AG04450 (cell line): ENCODE measurements at regions of chr1 and their contacts with region 1.

Region 1: GRCh38 chr1:44730741-44731512 is at the start of gene RNU5D-1:
- DNase-seq: peak; percentile 94
- H3K4me3 ChIP-seq: peak within 1 kb of the TSS; percentile 17; the same call in 1 of the 2 replicates
- H3K27ac ChIP-seq: peak within 1 kb of the TSS; percentile 98
- H3K27me3 ChIP-seq: no peaks in the 10 kb centered on the region
- CTCF ChIP-seq: peak; percentile 82
- polyA plus RNA-seq, gene RNU5D-1: not detected in 2 replicates

Region 2: GRCh38 chr1:44405041-44405797 is 325.7 kb before region 1 on chr1 and contains the start of gene RNF220:
- CTCF ChIA-PET with region 1: no interaction called
- POLR2A ChIA-PET with region 1: no interaction called
- DNase-seq: peak; percentile 7
- H3K4me3 ChIP-seq: peak within 1 kb of the TSS; percentile 42
- H3K27ac ChIP-seq: no peak within 1 kb of the TSS
- H3K27me3 ChIP-seq: peaks cover 76% of the 10 kb centered on the region
- CTCF ChIP-seq: no peak
- polyA plus RNA-seq, gene RNF220: 46.4 and 48.0 TPM in 2 replicates

Region 3: DNA sequence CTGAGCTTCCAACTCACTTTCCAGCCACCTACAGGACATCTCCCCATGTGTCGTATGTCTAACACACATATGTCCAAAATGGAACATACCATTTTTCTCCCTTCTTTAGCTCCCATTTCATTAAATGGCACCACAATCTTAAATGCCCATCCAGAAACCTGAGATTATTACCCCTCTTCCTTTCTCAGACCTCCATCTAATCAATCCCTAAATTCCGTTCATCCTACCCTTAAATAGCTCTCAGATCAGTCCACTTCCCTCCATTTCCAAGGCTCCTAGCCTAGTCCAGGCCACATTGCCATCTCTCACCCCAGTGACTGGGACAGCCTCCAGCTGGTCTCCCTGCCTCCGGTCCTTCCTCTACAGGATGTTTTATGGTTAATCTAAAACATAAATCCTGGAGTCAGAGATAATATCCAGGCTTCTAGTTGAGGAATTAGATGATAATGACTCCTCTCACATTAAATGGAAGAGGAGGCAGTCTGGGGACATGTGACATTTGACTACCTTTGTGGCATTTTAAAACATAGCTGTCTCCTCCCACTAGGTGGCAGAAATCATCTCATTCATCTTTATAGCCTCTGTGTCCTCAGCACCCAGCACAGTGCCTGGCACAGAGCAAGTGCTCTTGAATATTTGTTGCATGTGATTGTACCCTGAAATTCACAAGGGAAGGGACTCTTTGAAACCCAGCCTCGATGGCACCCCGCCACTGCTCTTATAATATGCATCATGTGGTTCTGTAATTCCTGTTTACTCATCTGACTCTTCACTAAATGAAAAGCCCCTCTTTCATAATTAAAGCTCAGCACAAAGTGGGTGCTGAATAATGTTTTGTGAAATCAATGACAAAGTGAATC is 159.0 kb before region 1 on chr1:
- CTCF ChIA-PET with region 1: no interaction called
- POLR2A ChIA-PET with region 1: no interaction called
- DNase-seq: no peak
- H3K4me3 ChIP-seq: no peak overlapping the region
- H3K27ac ChIP-seq: no peak overlapping the region
- H3K27me3 ChIP-seq: peaks cover 52% of the 10 kb centered on the region
- CTCF ChIP-seq: peak; percentile 36

Region 4: DNA sequence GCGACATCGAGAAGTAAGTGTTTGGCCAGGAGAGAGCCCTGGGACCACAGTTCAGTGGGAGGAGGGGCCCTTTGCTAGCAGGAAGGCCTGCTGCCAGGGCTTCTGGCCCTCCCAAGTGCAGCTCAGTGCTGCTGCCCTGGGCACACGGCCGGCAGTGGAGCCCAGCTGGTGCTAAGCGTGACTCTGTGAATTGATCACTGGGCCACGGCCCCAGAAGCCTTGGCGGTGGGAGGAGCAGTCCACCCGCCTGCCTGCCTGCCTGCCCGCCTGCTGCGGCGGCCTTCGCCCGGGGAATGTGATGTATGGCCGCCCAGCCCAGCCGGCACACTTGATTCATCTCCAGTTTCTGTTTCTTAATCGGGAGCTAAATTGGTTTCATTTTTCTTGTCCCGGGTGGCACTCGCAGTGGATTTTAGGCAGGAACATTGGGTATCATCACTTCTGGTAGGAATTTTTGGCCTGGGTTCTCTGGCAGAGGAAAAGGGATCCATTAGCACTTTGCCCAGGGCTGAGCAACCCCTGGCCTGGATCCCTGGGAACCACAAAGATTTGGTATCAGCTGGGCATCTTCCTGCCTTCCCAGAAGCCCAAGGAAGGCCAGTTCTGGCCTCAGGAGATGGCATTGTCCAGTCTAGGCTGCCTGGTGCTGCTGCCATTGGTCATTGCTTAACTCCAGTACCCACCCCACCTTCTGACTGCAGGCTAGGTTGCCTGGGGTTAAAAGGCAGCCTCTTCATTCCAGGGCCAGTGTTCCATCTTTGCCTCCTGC is 85.3 kb before region 1 on chr1:
- CTCF ChIA-PET with region 1: no interaction called
- POLR2A ChIA-PET with region 1: interaction called, 11 read pairs
- DNase-seq: no peak
- H3K4me3 ChIP-seq: no peak overlapping the region; the same call in 1 of the 2 replicates
- H3K27ac ChIP-seq: peak overlapping the region; percentile 90
- H3K27me3 ChIP-seq: no peaks in the 10 kb centered on the region
- CTCF ChIP-seq: no peak

Region 5: GRCh38 chr1:44714944-44715571 is 15.9 kb before region 1 on chr1:
- CTCF ChIA-PET with region 1: interaction called, 44 read pairs
- POLR2A ChIA-PET with region 1: no interaction called
- DNase-seq: no peak
- H3K4me3 ChIP-seq: no peak overlapping the region
- H3K27ac ChIP-seq: no peak overlapping the region
- H3K27me3 ChIP-seq: no peaks in the 10 kb centered on the region
- CTCF ChIP-seq: peak; percentile 96

Region 6: DNA sequence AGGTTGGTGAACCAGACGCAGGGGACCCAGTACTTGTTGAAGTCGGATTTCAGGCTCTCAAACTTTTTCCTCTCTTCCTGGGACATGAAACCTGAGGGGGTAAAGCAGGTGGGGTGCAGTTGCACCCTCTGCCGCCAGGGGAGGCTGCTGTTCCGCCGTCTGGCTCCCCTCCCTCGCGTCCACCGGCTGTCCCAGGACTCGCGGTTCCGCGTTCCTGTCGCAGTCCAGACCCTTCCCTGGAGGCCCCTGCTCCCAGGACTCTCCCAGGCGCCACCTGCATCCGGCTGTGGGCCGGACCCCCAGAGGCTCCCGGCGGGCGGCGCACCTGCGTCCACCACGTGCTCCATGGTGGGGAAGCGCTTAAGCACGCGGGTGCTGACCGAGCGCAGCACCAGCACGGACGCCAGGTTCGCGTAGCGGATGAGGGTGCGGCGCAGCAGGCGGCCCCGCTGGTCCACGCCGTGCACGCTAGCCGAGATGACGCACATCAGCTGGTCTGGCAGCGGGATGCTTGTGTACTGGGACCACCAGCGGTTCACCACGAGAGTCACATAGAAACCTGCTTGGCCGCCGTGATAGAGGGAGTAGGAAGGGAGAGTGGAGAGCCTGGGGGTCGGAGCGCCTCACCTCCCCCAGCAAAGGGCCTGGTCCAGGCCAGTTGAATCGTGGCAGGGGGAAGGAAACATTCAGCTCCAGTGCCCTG is 55.4 kb after region 1 on chr1:
- CTCF ChIA-PET with region 1: interaction called, 10 read pairs
- POLR2A ChIA-PET with region 1: interaction called, 11 read pairs
- DNase-seq: no peak
- H3K4me3 ChIP-seq: peak overlapping the region; percentile 50
- H3K27ac ChIP-seq: no peak overlapping the region
- H3K27me3 ChIP-seq: peaks cover 2% of the 10 kb centered on the region
- CTCF ChIP-seq: peak; percentile 96

Region 7: GRCh38 chr1:44819608-44820327 is 88.8 kb after region 1 on chr1:
- CTCF ChIA-PET with region 1: interaction called, 6 read pairs
- POLR2A ChIA-PET with region 1: interaction called, 32 read pairs
- DNase-seq: peak; percentile 89
- H3K4me3 ChIP-seq: peak overlapping the region; percentile 62
- H3K27ac ChIP-seq: peak overlapping the region; percentile 99
- H3K27me3 ChIP-seq: no peaks in the 10 kb centered on the region
- CTCF ChIP-seq: no peak